CD4-positive, alpha-beta T cell (primary cell): ENCODE measurements at regions of chr1 and their contacts with region 1.

Region 1: GRCh38 chr1:151459331-151460046 is at the start of gene POGZ:
- DNase-seq: peak; percentile 92 to 97 (median 94)
- ATAC-seq: peak; percentile 63
- H3K4me3 ChIP-seq: peak within 1 kb of the TSS; percentile 87
- H3K4me3 Mint-ChIP-seq: peak within 1 kb of the TSS; percentile 97
- H3K27ac ChIP-seq: peak within 1 kb of the TSS; percentile 70 to 87
- H3K27ac Mint-ChIP-seq: peak within 1 kb of the TSS; percentile 97
- H3K4me1 ChIP-seq: peaks cover 21% of the 10 kb centered on the region
- H3K4me1 Mint-ChIP-seq: peaks cover 40% of the 10 kb centered on the region
- H3K27me3 ChIP-seq: peaks cover 4 to 6% of the 10 kb centered on the region in 2 experiments
- H3K27me3 Mint-ChIP-seq: peaks cover 36% of the 10 kb centered on the region
- CTCF ChIP-seq: no peak
- total RNA-seq, gene POGZ: 97.8 to 99.4 TPM

Region 2: DNA sequence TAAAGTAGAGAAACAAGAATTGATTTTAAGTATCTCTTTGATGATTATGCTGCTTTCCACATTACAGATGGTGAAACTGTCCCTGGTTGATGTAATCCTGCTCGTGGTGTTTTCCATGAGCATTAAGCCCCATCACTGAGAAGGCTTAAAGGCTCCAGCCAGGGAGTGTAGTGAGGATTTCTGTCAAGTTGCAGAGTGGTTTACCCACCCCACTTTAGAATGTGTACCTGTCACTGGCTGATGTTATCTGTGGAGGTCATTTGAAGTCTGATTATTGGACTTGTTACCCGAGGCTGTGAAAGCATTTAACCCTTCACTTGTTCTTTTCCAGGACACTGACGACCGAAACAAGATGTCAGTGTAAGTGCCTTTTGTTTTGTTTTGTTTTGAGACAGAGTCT is 497.7 kb before region 1 on chr1:
- CTCF ChIA-PET with region 1: no interaction called
- POLR2A ChIA-PET with region 1: no interaction called
- intact Hi-C with region 1: no loop called
- DNase-seq: no peak
- ATAC-seq: no peak
- H3K4me3 ChIP-seq: no peak overlapping the region
- H3K4me3 Mint-ChIP-seq: no peak overlapping the region
- H3K27ac ChIP-seq: no peak overlapping the region
- H3K27ac Mint-ChIP-seq: no peak overlapping the region
- H3K4me1 ChIP-seq: no peaks in the 10 kb centered on the region
- H3K4me1 Mint-ChIP-seq: no peaks in the 10 kb centered on the region
- H3K27me3 ChIP-seq: no peaks in the 10 kb centered on the region
- H3K27me3 Mint-ChIP-seq: no peaks in the 10 kb centered on the region
- CTCF ChIP-seq: no peak

Region 3: DNA sequence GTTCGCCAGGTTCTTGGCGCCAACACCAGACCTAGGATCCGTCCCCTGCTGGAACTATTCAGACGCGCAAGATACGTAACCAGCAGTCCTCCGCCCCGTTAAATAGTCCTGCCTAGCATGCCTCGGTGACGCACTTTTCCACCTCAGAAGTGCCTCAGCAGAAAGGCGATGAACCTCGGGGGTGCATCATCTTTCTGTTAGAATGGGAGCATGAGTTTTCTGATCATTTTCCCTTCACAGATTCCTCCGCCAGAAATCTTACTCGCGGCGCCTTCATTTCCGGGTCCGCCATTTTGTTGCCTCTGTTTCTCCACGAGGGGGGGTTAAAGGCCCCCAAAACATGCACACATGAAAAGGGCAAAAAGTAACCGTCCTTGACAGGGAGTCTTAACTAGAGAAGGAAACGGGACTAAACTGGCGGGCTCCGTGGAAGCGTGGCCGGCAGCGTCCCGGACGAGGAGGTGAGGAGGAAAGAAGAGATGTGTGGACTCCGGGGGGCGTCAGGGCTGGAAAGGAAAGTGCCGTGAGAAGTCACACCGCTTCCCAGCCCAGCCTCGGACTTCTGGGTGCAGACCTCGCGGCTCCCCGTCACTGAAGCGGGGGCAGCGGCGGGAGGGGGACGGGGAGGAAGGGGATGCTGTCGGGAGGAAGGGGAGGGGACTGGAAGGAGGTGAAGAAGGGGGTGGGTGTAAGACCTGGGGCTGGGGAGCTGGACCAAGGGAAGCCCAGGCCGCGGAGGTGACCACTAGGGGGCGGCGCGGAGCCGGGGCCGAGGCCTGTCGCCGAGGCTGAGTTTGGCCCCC is 388.8 kb before region 1 on chr1 and contains the start of gene GABPB2:
- CTCF ChIA-PET with region 1: no interaction called
- POLR2A ChIA-PET with region 1: no interaction called
- intact Hi-C with region 1: loop called in 1 of 2 experiments (anchors 5 kb)
- DNase-seq: peak; percentile 77 to 95 (median 82)
- ATAC-seq: peak; percentile 80
- H3K4me3 ChIP-seq: peak within 1 kb of the TSS; percentile 87
- H3K4me3 Mint-ChIP-seq: peak within 1 kb of the TSS; percentile 99
- H3K27ac ChIP-seq: peak within 1 kb of the TSS; percentile 94 to 98
- H3K27ac Mint-ChIP-seq: peak within 1 kb of the TSS; percentile 98
- H3K4me1 ChIP-seq: peaks cover 31% of the 10 kb centered on the region
- H3K4me1 Mint-ChIP-seq: peaks cover 27% of the 10 kb centered on the region
- H3K27me3 ChIP-seq: no peaks in the 10 kb centered on the region
- H3K27me3 Mint-ChIP-seq: no peaks in the 10 kb centered on the region
- CTCF ChIP-seq: peak; percentile 93
- total RNA-seq, gene GABPB2: 23.7 to 25.5 TPM

Region 4: DNA sequence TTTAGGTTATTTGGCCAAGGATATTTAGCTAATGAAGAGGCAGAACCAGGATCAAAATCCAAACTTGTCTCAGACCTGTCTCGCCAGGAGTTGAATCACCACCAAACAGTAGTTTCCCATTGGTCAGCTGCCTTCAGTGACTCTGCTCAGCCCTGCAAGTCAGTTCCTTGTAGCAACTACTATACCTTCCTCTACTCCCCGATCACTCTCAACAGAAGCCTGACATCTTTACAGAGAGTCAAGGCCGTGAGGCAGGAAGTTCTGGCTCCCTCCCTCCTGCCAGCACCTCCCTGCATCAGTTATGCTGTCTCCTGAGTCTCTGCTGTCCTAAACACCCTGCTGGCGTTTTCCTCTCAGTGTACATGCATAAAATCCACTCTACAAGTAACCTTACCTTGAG is 191.7 kb before region 1 on chr1:
- CTCF ChIA-PET with region 1: no interaction called
- POLR2A ChIA-PET with region 1: no interaction called
- intact Hi-C with region 1: no loop called
- DNase-seq: no peak
- ATAC-seq: no peak
- H3K4me3 ChIP-seq: no peak overlapping the region
- H3K4me3 Mint-ChIP-seq: no peak overlapping the region
- H3K27ac ChIP-seq: no peak overlapping the region
- H3K27ac Mint-ChIP-seq: no peak overlapping the region
- H3K4me1 ChIP-seq: no peaks in the 10 kb centered on the region
- H3K4me1 Mint-ChIP-seq: no peaks in the 10 kb centered on the region
- H3K27me3 ChIP-seq: no peaks in the 10 kb centered on the region
- H3K27me3 Mint-ChIP-seq: no peaks in the 10 kb centered on the region
- CTCF ChIP-seq: no peak

Region 5: GRCh38 chr1:151443846-151444782 is 15.4 kb before region 1 on chr1:
- CTCF ChIA-PET with region 1: interaction called, 10 read pairs
- POLR2A ChIA-PET with region 1: interaction called, 5 read pairs
- intact Hi-C with region 1: loop called in 1 of 2 experiments (anchors 1 kb)
- DNase-seq: peak; percentile 40 to 87 (median 60)
- ATAC-seq: peak; percentile 99
- H3K4me3 ChIP-seq: no peak overlapping the region
- H3K4me3 Mint-ChIP-seq: no peak overlapping the region
- H3K27ac ChIP-seq: no peak overlapping the region
- H3K27ac Mint-ChIP-seq: peak overlapping the region; percentile 14
- H3K4me1 ChIP-seq: peaks cover 11% of the 10 kb centered on the region
- H3K4me1 Mint-ChIP-seq: peaks cover 55% of the 10 kb centered on the region
- H3K27me3 ChIP-seq: no peaks in the 10 kb centered on the region
- H3K27me3 Mint-ChIP-seq: no peaks in the 10 kb centered on the region
- CTCF ChIP-seq: peak; percentile 85

Region 6: GRCh38 chr1:151504252-151504651 is 44.8 kb after region 1 on chr1:
- CTCF ChIA-PET with region 1: no interaction called
- POLR2A ChIA-PET with region 1: no interaction called
- intact Hi-C with region 1: loop called in 1 of 2 experiments (anchors 2 kb)
- DNase-seq: no peak
- ATAC-seq: no peak
- H3K4me3 ChIP-seq: no peak overlapping the region
- H3K4me3 Mint-ChIP-seq: no peak overlapping the region
- H3K27ac ChIP-seq: no peak overlapping the region
- H3K27ac Mint-ChIP-seq: no peak overlapping the region
- H3K4me1 ChIP-seq: no peaks in the 10 kb centered on the region
- H3K4me1 Mint-ChIP-seq: no peaks in the 10 kb centered on the region
- H3K27me3 ChIP-seq: no peaks in the 10 kb centered on the region
- H3K27me3 Mint-ChIP-seq: peaks cover 6% of the 10 kb centered on the region
- CTCF ChIP-seq: no peak

Region 7: DNA sequence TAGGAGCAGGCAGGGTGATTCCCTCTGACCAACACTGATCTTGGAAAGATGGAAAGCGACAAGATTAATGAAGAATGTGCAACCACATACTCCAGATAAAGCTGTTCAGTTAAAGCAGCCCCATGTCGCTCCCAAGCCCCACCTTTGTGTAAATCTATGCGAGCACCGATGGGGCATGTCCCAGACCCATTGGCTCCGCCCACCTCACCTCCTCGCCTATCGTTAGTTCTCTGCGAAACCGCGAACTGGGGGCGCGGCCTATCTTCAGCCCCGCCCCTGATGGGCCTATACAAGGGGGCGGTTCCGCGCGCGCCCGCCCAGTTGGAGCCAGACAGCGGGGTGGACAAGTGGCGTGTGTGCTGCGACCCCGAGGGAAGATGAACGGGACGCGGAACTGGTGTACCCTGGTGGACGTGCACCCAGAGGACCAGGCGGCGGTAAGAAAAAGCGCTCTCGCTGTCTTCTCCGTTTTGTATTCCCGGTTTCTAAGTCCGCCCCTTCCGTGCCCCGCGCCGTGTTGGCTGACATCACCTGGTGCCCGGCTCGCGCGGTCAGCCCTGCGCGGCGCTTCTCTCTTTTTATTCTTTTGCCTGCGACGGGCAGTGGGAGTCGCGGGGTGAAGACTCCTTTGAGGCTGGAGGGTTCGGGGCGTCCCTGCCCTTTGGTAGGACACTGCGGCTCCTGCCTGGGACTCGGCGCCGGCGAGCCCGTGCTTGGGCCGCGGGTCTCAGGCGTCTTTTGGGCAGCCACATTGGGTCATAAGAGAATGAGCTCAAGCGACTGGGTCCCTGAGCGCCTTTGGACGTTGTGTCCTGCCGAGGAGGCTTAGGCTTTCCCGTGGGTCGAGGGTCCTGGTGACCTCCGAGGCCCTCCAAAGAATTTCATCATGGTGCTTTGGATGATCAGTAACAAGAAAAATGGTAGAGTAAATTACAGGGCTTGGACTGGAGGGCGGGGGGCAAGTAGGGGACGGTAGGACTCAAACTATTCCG is 80.8 kb after region 1 on chr1 and contains the start of gene TUFT1:
- CTCF ChIA-PET with region 1: no interaction called
- POLR2A ChIA-PET with region 1: no interaction called
- intact Hi-C with region 1: loop called in 1 of 2 experiments (anchors 2 kb)
- DNase-seq: peak; percentile 88 to 97 (median 93)
- ATAC-seq: peak; percentile 99
- H3K4me3 ChIP-seq: peak within 1 kb of the TSS; percentile 73
- H3K4me3 Mint-ChIP-seq: peak within 1 kb of the TSS; percentile 97
- H3K27ac ChIP-seq: peak within 1 kb of the TSS in 1 of 2 donors; percentile 10
- H3K27ac Mint-ChIP-seq: peak within 1 kb of the TSS; percentile 86
- H3K4me1 ChIP-seq: peaks cover 25% of the 10 kb centered on the region
- H3K4me1 Mint-ChIP-seq: peaks cover 24% of the 10 kb centered on the region
- H3K27me3 ChIP-seq: no peaks in the 10 kb centered on the region
- H3K27me3 Mint-ChIP-seq: no peaks in the 10 kb centered on the region
- CTCF ChIP-seq: no peak
- total RNA-seq, gene TUFT1: 7.2 to 9.6 TPM

Region 8: DNA sequence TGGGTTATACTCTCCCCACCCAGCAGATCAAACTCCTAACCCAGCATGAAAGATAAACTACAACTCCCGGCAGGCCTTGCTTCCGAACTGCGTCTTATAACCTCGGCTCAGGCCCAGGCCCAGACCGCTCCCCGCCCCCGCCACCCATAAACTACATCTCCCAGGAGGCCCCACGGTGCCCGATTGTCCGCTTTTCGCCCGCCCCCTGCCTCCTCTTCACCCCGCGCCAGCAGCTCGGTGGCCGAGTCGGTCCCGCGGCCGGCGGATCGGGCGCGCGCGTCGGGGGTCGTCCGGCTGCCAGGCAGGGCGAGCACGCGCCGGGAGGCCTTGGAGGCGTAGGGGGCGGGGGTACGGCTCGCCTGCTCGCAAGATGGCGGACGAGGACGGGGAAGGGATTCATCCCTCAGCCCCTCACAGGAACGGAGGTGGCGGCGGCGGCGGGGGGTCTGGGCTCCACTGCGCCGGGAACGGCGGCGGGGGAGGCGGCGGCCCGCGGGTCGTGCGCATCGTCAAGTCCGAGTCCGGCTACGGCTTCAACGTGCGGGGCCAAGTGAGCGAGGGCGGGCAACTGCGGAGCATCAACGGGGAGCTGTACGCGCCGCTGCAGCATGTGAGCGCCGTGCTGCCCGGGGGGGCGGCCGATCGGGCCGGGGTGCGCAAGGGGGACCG is 152.5 kb after region 1 on chr1 and contains the start of gene SNX27:
- CTCF ChIA-PET with region 1: no interaction called
- POLR2A ChIA-PET with region 1: no interaction called
- intact Hi-C with region 1: loop called in 1 of 2 experiments (anchors 2 kb)
- DNase-seq: peak; percentile 71 to 95 (median 84)
- ATAC-seq: peak; percentile 91
- H3K4me3 ChIP-seq: peak within 1 kb of the TSS; percentile 64
- H3K4me3 Mint-ChIP-seq: peak within 1 kb of the TSS; percentile 99
- H3K27ac ChIP-seq: peak within 1 kb of the TSS; percentile 48 to 81
- H3K27ac Mint-ChIP-seq: peak within 1 kb of the TSS; percentile 90
- H3K4me1 ChIP-seq: peaks cover 19% of the 10 kb centered on the region
- H3K4me1 Mint-ChIP-seq: peaks cover 50% of the 10 kb centered on the region
- H3K27me3 ChIP-seq: no peaks in the 10 kb centered on the region
- H3K27me3 Mint-ChIP-seq: peaks cover 12% of the 10 kb centered on the region
- CTCF ChIP-seq: no peak
- total RNA-seq, gene SNX27: 13.2 to 13.3 TPM

Region 9: GRCh38 chr1:151993654-151994496 is 534.4 kb after region 1 on chr1 and contains the start of gene S100A10:
- CTCF ChIA-PET with region 1: no interaction called
- POLR2A ChIA-PET with region 1: no interaction called
- intact Hi-C with region 1: loop called in 1 of 2 experiments (anchors 10 kb)
- DNase-seq: peak; percentile 63 to 91 (median 80)
- ATAC-seq: peak; percentile 88
- H3K4me3 ChIP-seq: peak within 1 kb of the TSS; percentile 95
- H3K4me3 Mint-ChIP-seq: peak within 1 kb of the TSS; percentile 94
- H3K27ac ChIP-seq: peak within 1 kb of the TSS; percentile 82 to 92
- H3K27ac Mint-ChIP-seq: peak within 1 kb of the TSS; percentile 91
- H3K4me1 ChIP-seq: peaks cover 53% of the 10 kb centered on the region
- H3K4me1 Mint-ChIP-seq: peaks cover 58% of the 10 kb centered on the region
- H3K27me3 ChIP-seq: no peaks in the 10 kb centered on the region
- H3K27me3 Mint-ChIP-seq: no peaks in the 10 kb centered on the region
- CTCF ChIP-seq: no peak
- total RNA-seq, gene S100A10: 189 to 204 TPM